ENCODE measurements at regions of chr1 and their contacts with region 1.

Region 1: DNA sequence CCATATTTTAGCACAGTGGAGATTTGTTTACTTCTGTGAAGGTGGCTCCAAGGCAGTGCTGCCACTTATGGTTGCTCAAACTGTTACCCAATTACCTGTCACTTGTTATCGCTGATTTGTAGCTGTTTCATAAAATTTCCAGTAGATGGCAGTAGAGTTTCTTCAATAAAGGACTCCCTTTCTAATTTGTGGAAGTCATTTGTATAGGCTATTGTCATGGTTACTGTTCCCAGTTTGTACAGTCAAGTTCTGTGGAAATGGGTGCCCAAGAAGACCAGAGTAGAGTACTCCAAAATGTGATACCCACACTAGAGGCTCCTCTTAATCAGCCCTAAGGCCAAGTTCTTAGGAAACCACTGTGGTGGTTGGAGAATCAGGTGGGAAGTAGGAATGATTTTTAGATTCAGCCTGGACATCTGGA is 186.1 kb downstream of the CLEC20A start:
- ATAC-seq: peak; percentile 58 to 97 (median 76)
- H3K4me3 ChIP-seq: no peak overlapping the region
- H3K27ac ChIP-seq: no peak overlapping the region
- H3K4me1 ChIP-seq: peaks cover 0 to 2% of the 10 kb centered on the region in 2 donors

Region 2: DNA sequence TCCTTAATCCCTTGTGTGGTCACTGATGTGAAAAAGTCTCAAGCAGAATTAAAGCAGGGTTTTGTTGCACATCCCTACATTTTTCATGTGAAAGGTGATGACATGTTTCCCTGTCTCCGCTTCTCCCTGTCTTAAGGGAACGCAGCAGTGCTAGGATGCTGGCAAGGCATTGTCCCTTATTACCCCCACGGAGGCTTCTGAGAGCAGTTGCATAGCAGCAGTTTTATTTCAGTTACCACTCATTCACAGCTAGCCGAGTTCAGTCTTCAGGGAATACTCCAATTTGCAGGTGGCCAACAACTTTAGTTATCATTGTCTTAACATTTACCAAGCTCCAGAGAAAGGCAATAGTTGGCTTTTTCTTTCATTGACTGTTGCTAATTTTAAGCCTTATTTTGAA is 97.0 kb after region 1 on chr1:
- in situ Hi-C with region 1: no loop called
- ATAC-seq: peak in 5 of 8 experiments; percentile 78 to 98 (median 89)
- H3K4me3 ChIP-seq: no peak overlapping the region
- H3K27ac ChIP-seq: no peak overlapping the region
- H3K4me1 ChIP-seq: peaks cover 0 to 3% of the 10 kb centered on the region in 2 donors

Region 3: DNA sequence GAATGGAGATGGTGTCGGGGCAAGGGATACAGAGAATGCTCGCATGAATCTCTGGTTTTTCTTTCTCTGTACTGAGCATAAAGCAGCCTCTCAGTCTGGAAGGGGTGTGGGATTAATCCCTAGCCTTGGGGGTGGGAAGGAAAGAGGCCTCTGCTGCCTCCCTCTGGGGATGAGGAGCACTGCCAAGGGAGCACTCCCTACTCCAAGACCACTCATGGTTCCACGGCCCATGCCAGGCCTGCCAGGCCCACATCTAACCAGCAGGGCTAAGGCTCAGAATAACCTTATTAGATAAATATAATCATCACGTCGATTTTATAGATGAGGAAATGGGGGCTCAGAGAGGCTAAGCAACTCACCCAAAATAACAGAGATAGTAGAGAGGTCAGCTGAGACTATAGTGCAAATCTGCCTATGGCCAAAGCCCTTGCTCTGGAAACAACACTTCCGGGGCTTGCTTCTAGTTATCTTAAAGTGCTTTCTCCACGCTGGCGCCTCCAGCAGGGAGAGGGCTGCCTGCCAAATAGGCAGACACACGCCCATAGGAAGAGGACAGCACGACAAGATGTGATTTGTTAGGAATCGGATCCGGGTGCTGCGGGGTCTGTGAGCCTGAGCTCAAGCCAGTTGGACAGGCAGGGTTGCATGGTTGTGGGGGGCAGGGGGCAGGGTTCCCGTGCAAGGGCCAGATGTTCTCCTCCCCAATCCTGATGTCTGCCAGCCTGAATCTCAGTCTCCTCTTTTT is 202.8 kb after region 1 on chr1:
- in situ Hi-C with region 1: loop called in 2 of 9 experiments (anchors 10 kb)
- ATAC-seq: peak in 3 of 8 experiments; percentile 84 to 97 (median 94)
- H3K4me3 ChIP-seq: no peak overlapping the region
- H3K27ac ChIP-seq: no peak overlapping the region
- H3K4me1 ChIP-seq: no peaks in the 10 kb centered on the region

Region 4: GRCh38 chr1:178725603-178726517 is 415.2 kb after region 1 on chr1:
- in situ Hi-C with region 1: loop called in 1 of 9 experiments (anchors 25 kb)
- ATAC-seq: peak; percentile 59 to 79 (median 64)
- H3K4me3 ChIP-seq: peak overlapping the region; percentile 80 to 94 (median 87)
- H3K27ac ChIP-seq: peak overlapping the region; percentile 82 to 84
- H3K4me1 ChIP-seq: peaks cover 10 to 22% of the 10 kb centered on the region in 2 donors

Region 5: GRCh38 chr1:178768423-178768822 is 457.7 kb after region 1 on chr1:
- in situ Hi-C with region 1: loop called in 2 of 9 experiments (anchors 25 kb)
- ATAC-seq: peak in 3 of 8 experiments; percentile 59 to 68 (median 59)
- H3K4me3 ChIP-seq: no peak overlapping the region
- H3K27ac ChIP-seq: no peak overlapping the region
- H3K4me1 ChIP-seq: no peaks in the 10 kb centered on the region

Region 6: DNA sequence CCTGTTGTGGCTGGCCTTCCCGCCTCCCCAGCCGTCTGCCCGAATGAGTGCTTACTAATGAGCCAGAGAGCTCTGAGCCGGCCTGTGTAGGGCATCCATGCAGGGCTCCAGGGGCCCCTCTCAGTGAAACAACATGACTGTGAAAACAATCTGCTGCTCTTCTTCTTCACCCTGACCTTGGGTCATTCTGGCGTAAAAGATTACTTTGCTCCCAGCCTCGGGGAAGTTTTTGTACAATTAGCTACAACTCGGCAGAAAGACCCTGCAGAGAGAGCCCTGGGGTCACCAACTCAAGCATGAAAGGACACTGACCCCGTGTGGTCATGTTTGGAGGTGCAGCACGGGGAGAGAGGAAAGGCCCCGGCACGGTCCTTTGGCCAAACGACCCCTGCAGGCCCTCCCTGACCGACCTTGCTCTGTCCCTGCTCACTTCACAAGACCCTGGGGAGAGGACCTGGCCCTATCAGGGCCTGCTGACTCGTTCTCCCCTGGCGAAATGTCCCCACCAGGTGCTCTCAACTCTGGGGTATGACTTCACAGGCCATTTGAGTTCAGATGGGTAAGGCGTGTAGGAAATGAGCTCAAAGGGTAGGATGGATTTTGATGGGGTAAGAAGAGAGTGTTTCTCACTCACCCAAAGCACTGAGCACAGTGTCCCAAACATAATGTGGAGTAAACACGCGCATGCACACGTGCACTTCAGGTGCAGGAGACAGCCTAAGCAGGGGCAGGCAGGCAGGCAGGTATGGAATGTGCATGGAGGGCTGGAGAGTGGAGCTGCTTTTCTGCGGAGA is 692.1 kb after region 1 on chr1:
- in situ Hi-C with region 1: loop called in 2 of 9 experiments (anchors 25 kb)
- ATAC-seq: peak; percentile 75 to 97 (median 94)
- H3K4me3 ChIP-seq: no peak overlapping the region
- H3K27ac ChIP-seq: no peak overlapping the region
- H3K4me1 ChIP-seq: no peaks in the 10 kb centered on the region

Measured in motor neuron (in vitro differentiated cells).